Left ventricle myocardium superior (tissue), 1 donor: ENCODE measurements at regions of chr1 and their contacts with region 1.

Region 1: GRCh38 chr1:157090196-157090647 is 9.4 kb downstream of the ETV3L start:
- DNase-seq: peak; percentile 91
- ATAC-seq: peak; percentile 89

Region 2: DNA sequence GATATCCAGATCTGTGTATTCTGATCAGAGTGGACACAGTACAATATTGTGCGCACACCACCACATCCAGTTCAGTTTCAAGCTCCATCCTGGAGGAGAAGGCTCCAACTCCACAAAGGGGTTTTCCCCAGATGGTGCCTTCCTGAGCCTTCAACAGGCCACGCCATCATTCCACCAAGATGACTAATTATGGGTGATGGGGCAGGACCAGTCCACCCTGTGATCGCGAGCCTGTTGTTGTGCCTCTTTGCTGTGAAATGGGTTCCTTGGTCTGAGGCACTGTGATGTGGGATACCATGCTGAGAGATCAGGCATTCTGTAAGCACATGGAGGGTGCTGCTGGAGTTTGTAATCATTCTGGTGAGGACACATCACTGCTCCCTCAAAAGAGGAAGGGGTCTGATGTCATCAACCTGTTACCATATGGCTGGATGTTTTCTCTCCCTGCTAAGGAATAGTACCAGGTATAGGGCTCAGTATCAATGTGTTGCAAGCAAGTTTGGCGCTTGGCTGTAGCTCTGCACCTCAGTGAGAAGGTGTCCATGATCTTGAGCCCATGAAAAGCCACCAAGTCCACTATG is 266.9 kb before region 1 on chr1:
- intact Hi-C with region 1: no loop called
- DNase-seq: no peak
- ATAC-seq: no peak

Region 3: DNA sequence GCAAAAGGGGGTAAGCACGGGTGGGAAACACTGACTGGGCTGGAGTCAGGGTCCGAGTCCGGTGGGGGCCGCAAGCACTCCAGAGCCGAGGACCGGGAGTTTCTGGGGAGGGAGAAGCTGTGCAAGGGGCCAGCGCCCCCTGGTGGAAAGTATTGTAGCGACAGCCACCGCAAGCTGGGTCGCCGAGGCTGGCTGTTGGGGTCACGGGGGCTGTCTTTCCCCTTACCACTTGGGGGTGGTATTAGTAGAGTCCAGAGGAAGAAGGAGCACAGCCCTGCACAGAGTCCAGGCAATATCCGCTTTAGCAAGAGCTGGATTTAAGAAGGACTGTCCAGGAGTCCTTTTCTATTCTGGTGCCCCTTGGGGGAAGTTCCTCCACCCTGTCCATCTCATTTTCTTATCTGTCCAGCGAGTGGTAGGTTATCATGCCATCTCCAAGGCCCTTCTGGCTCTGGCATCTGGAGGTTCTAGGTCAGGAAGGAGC is 65.9 kb after region 1 on chr1:
- intact Hi-C with region 1: loop called (anchors 5 kb)
- DNase-seq: peak; percentile 85
- ATAC-seq: peak; percentile 84

Region 4: GRCh38 chr1:157240495-157241184 is 150.4 kb after region 1 on chr1:
- intact Hi-C with region 1: no loop called
- DNase-seq: no peak
- ATAC-seq: no peak

Region 5: DNA sequence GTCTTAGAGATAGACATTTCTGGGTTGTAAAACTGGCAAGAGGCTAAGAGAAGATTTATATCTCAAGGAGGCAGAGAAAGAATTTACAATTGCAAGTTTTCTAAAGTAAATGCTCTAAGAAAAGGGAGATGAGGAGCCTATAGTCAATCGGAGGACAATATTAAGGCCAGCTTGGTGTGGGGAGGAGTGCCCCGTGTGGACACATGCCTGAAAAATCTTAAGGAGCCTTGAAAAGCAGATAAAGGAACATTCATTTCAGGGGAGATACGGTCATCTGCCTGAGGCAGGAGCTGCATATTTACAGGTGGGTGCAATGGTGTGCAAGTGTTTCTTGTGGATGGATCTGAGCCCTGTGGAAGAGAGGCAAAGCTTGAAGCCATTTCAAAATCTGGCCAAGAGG is 661.1 kb after region 1 on chr1:
- intact Hi-C with region 1: no loop called
- DNase-seq: no peak
- ATAC-seq: no peak